ENCODE measurements at regions of chr12 and their contacts with region 1.

Region 1: GRCh38 chr12:105382771-105383622 is 52.5 kb downstream of the C12orf75 start:
- DNase-seq: no peak
- H3K4me3 Mint-ChIP-seq: no peak overlapping the region
- H3K27ac Mint-ChIP-seq: no peak overlapping the region
- H3K4me1 Mint-ChIP-seq: no peaks in the 10 kb centered on the region
- H3K27me3 Mint-ChIP-seq: no peaks in the 10 kb centered on the region

Region 2: GRCh38 chr12:105226219-105226618 is 156.8 kb before region 1 on chr12:
- intact Hi-C with region 1: loop called (anchors 5 kb)
- DNase-seq: peak; percentile 21
- H3K4me3 Mint-ChIP-seq: no peak overlapping the region
- H3K27ac Mint-ChIP-seq: peak overlapping the region; percentile 51
- H3K4me1 Mint-ChIP-seq: peaks cover 51% of the 10 kb centered on the region
- H3K27me3 Mint-ChIP-seq: no peaks in the 10 kb centered on the region

Region 3: GRCh38 chr12:105279460-105280056 is 103.4 kb before region 1 on chr12:
- intact Hi-C with region 1: loop called (anchors 1 kb)
- DNase-seq: peak; percentile 30
- H3K4me3 Mint-ChIP-seq: no peak overlapping the region
- H3K27ac Mint-ChIP-seq: no peak overlapping the region
- H3K4me1 Mint-ChIP-seq: peaks cover 13% of the 10 kb centered on the region
- H3K27me3 Mint-ChIP-seq: no peaks in the 10 kb centered on the region

Region 4: DNA sequence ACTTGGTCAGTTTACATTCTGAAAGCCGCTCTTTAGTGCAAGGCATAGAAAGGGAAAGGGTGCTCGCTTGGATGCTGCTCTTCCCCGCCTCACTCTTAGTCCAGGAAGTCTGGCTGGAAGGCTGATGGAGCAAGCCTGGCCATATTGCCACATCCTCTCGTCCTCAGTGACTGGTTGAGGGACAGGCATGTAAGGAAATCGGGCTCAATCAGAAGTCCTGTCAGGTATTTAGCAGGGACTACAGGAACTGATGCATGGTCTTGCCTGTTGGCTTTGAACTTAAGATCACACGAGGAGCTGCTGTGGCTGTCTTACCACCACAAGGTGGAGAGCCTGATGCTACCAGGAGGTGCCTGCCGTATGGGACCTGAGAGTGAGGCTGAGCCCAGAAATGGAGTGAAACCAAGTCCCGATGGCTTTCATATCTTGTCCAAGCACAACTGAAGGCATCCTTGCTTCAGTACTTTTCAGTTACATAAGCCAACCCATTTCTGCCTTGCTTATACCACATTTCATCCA is 63.2 kb before region 1 on chr12:
- intact Hi-C with region 1: loop called (anchors 1 kb)
- DNase-seq: no peak
- H3K4me3 Mint-ChIP-seq: no peak overlapping the region
- H3K27ac Mint-ChIP-seq: no peak overlapping the region
- H3K4me1 Mint-ChIP-seq: peaks cover 70% of the 10 kb centered on the region
- H3K27me3 Mint-ChIP-seq: no peaks in the 10 kb centered on the region

Measured in activated T-helper 2 cell treated with anti-CD3 and anti-CD28 coated beads, Interferon-gamma antibody, Interleukin-2, Interleukin-4, amounts not matched to agents 10 μg/mL and 5 μg/mL and 100 μg/mL, durations not matched to agents 14 hours and 24 hours and 36 hours (primary cell).